GM12878 (cell line): ENCODE measurements at regions of chr11 and their contacts with region 1.

Region 1: GRCh38 chr11:34585735-34586487 is 35.0 kb upstream of the EHF start:
- DNase-seq: peak; percentile 20
- ATAC-seq: peak; percentile 91
- H3K4me3 ChIP-seq: no peak overlapping the region
- H3K27ac ChIP-seq: no peak overlapping the region
- H3K4me1 ChIP-seq: no peaks in the 10 kb centered on the region
- H3K27me3 ChIP-seq: no peaks in the 10 kb centered on the region; a peak in 2 of 4 replicates
- CTCF ChIP-seq: peak; percentile 54 to 64 (median 59); a peak in 5 of 6 replicates
- EP300 ChIP-seq: no peak
- POLR2A ChIP-seq: no peak
- RAD21 ChIP-seq: peak; percentile 91

Region 2: GRCh38 chr11:34653826-34654490 is 68.0 kb after region 1 on chr11:
- CTCF ChIA-PET with region 1: interaction called, 3 read pairs
- POLR2A ChIA-PET with region 1: no interaction called
- RAD21 ChIA-PET with region 1: no interaction called
- SMC1A ChIA-PET with region 1: interaction called, 8 read pairs
- in situ Hi-C with region 1: no loop called
- intact Hi-C with region 1: loop called (anchors 5 kb)
- DNase-seq: no peak
- ATAC-seq: no peak
- H3K4me3 ChIP-seq: no peak overlapping the region
- H3K27ac ChIP-seq: no peak overlapping the region
- H3K4me1 ChIP-seq: peaks cover 41% of the 10 kb centered on the region
- H3K27me3 ChIP-seq: no peaks in the 10 kb centered on the region
- CTCF ChIP-seq: no peak
- EP300 ChIP-seq: no peak
- POLR2A ChIP-seq: no peak
- RAD21 ChIP-seq: no peak; the same call in 1 of the 2 replicates

Region 3: GRCh38 chr11:34840736-34841386 is 254.9 kb after region 1 on chr11:
- CTCF ChIA-PET with region 1: interaction called, 3 read pairs
- POLR2A ChIA-PET with region 1: no interaction called
- RAD21 ChIA-PET with region 1: no interaction called
- SMC1A ChIA-PET with region 1: interaction called, 6 read pairs
- in situ Hi-C with region 1: no loop called
- intact Hi-C with region 1: loop called (anchors 1 kb)
- DNase-seq: no peak
- ATAC-seq: peak; percentile 99
- H3K4me3 ChIP-seq: no peak overlapping the region
- H3K27ac ChIP-seq: no peak overlapping the region
- H3K4me1 ChIP-seq: no peaks in the 10 kb centered on the region
- H3K27me3 ChIP-seq: peaks cover 0 to 1% of the 10 kb centered on the region in 2 experiments; a peak in 2 of 4 replicates
- CTCF ChIP-seq: peak; percentile 57 to 80 (median 74)
- EP300 ChIP-seq: no peak
- POLR2A ChIP-seq: no peak
- RAD21 ChIP-seq: peak; percentile 51

Region 4: DNA sequence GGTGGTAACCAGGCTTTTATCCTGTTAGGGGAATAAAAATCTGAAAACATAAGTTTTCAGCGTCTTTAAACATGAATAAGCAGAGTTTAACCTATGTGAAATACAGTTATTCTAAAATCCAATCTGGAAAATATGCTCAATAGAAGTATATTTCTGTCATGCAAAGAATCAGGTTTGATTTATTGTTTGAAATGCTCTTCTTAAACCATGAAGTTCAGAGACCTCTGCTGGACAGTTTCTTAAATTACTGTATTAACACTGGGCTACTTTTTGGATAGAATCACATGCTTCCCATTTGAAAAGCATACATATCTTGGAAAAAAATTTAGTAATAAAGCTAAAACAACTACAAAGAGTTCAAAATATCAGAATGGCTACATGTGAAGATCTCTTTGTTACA is 304.9 kb after region 1 on chr11:
- CTCF ChIA-PET with region 1: interaction called, 41 read pairs
- POLR2A ChIA-PET with region 1: no interaction called
- RAD21 ChIA-PET with region 1: interaction called, 10 read pairs
- SMC1A ChIA-PET with region 1: interaction called, 17 read pairs
- in situ Hi-C with region 1: loop called (anchors 5 kb)
- intact Hi-C with region 1: loop called (anchors 1 kb)
- DNase-seq: no peak
- ATAC-seq: peak; percentile 41; the same call in 1 of the 3 replicates
- H3K4me3 ChIP-seq: no peak overlapping the region
- H3K27ac ChIP-seq: no peak overlapping the region
- H3K4me1 ChIP-seq: no peaks in the 10 kb centered on the region
- H3K27me3 ChIP-seq: no peaks in the 10 kb centered on the region
- CTCF ChIP-seq: peak; percentile 19 to 57 (median 41); a peak in 5 of 6 replicates
- EP300 ChIP-seq: no peak
- POLR2A ChIP-seq: no peak
- RAD21 ChIP-seq: peak; percentile 66

Region 5: DNA sequence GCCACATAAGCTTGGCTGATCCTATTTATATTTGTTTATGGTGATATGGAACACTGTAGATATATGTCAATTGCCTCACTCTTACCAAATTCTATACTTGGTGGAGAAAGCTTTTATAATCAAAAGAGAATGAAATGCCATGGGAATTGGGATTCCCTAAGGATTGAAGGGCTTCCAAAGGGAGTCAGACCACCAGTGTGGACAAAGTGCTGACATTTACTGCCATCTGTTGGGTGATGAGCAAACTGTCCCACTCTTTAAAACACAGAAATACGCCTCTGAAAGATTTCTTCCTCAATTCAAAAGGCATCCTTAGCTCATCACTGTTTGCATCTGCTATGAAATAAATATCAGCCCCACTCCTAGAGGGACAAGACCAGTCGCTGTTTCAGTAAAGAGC is 826.4 kb after region 1 on chr11:
- CTCF ChIA-PET with region 1: interaction called, 8 read pairs
- POLR2A ChIA-PET with region 1: no interaction called
- RAD21 ChIA-PET with region 1: no interaction called
- SMC1A ChIA-PET with region 1: no interaction called
- in situ Hi-C with region 1: loop called (anchors 10 kb)
- intact Hi-C with region 1: no loop called
- DNase-seq: no peak
- ATAC-seq: peak; percentile 31; the same call in 1 of the 3 replicates
- H3K4me3 ChIP-seq: no peak overlapping the region
- H3K27ac ChIP-seq: no peak overlapping the region
- H3K4me1 ChIP-seq: no peaks in the 10 kb centered on the region
- H3K27me3 ChIP-seq: peaks cover 2 to 12% of the 10 kb centered on the region in 2 experiments; a peak in 3 of 4 replicates
- CTCF ChIP-seq: peak; percentile 40 to 45 (median 44); a peak in 5 of 6 replicates
- EP300 ChIP-seq: no peak
- POLR2A ChIP-seq: no peak
- RAD21 ChIP-seq: peak; percentile 59